ENCODE measurements at regions of chr2 and their contacts with region 1.

Region 1: DNA sequence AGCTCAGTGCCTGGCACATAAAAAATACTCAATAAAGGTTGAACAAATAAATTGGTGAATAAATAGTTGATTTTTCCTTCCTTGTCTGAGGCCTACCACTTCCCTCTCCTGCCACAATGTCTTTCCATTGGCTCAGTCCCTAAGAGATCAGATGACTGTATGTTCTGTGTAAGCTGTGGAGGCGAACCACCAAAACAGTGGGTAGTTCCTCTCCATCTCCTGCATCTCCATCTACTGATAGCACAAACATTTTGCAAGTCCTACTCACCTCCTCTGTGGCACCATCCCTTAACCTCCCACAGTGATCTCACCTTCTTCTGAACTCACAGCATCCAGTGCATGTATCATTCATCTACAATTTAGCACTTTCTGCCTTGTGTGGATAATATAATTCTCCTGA is 50.2 kb downstream of the PCBP1 start:
- DNase-seq: no peak
- ATAC-seq: no peak
- H3K4me3 ChIP-seq: no peak overlapping the region
- H3K27ac ChIP-seq: peak overlapping the region in 1 of 4 donors; percentile 5
- H3K4me1 ChIP-seq: peaks cover 24 to 44% (median 44%) of the 10 kb centered on the region in 3 donors
- H3K27me3 ChIP-seq: no peaks in the 10 kb centered on the region
- CTCF ChIP-seq: no peak

Region 2: DNA sequence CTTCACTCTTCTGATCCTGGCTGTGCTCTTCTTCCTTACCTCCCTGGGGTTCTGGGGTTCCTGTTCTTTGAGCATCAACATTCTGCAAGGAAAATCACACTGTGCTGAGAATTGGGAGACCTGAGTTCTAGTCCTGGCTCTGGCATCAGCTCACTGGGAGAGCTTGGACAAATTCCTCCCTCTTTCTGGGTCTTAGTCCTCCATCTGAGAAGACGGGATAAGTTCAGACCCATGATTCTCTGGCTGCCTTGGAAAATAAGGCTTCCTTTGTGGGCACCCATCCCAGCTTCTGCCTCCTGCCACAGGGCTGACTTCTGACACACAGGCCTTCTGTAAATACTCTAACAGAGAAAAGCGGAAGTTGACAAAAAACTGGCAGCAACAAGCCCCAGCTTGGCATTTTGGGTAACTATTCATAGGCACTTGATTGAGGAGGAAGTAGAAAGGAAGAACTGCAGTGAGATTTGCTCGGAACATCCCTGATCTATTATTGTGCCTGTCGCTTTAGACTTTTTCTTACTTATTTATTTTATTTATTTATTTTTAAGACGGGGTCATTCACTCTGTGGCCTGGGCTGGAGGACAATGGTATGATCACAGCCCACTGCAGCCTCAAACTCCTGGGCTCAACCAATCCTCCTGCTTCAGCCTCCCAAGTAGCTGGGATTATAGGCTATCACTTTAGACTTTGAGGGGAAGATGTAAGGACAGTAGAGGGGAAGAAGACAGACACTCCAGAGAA is 42.4 kb before region 1 on chr2:
- intact Hi-C with region 1: loop called in 2 of 3 experiments (anchors 5 kb)
- DNase-seq: peak in 5 of 6 donors; percentile 65 to 77 (median 76)
- ATAC-seq: peak; percentile 87 to 94 (median 93)
- H3K4me3 ChIP-seq: no peak overlapping the region
- H3K27ac ChIP-seq: peak overlapping the region; percentile 61 to 95 (median 79)
- H3K4me1 ChIP-seq: peaks cover 10 to 15% (median 12%) of the 10 kb centered on the region in 3 donors
- H3K27me3 ChIP-seq: no peaks in the 10 kb centered on the region
- CTCF ChIP-seq: no peak

Measured in pancreas (tissue), 10 donors.